Caco-2 (cell line): ENCODE measurements at regions of chr18 and their contacts with region 1.

Region 1: DNA sequence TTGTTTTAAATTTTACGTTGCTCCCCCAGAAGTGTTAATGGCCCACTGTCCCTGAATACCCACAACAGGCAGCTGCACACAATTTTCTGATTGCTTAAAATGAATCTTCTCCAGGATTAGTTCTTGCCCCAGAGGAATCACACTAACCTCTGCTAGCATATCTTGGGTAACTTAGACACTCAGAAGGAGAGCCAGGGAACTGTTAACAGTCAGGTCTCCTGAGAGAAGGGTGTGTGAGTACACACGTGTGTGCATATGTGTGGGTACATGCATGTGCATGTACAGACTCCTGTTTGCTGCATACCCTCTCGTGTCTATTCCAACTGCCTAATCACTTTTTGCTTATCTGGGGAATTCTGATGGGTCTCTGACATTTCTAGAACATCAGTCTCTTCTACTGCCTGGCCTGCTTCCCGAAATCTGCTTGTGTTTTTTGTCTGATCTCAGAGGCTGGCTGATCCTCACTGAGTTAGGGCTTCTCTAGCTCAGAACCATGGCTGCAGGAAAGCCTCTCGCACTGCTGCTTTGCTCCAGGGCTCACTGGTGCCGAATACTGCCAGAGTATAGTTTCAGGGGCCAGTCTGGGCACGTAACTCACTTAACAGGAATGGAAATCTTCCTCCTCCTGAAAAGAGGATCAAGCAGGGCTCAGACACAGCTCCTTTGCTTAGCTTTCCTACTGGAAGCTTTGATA is 62.8 kb downstream of the PRELID3A start:
- DNase-seq: no peak
- H3K4me3 ChIP-seq: no peak overlapping the region
- H3K4me3 Mint-ChIP-seq: no peak overlapping the region
- H3K27ac Mint-ChIP-seq: no peak overlapping the region
- H3K4me1 ChIP-seq: no peaks in the 10 kb centered on the region
- H3K4me1 Mint-ChIP-seq: no peaks in the 10 kb centered on the region
- H3K27me3 ChIP-seq: no peaks in the 10 kb centered on the region
- H3K27me3 Mint-ChIP-seq: no peaks in the 10 kb centered on the region
- CTCF ChIP-seq: no peak

Region 2: GRCh38 chr18:12531749-12532148 is 61.2 kb after region 1 on chr18:
- CTCF ChIA-PET with region 1: no interaction called
- POLR2A ChIA-PET with region 1: no interaction called
- intact Hi-C with region 1: loop called (anchors 10 kb)
- DNase-seq: no peak
- H3K4me3 ChIP-seq: no peak overlapping the region
- H3K4me3 Mint-ChIP-seq: no peak overlapping the region
- H3K27ac Mint-ChIP-seq: no peak overlapping the region
- H3K4me1 ChIP-seq: no peaks in the 10 kb centered on the region
- H3K4me1 Mint-ChIP-seq: no peaks in the 10 kb centered on the region
- H3K27me3 ChIP-seq: no peaks in the 10 kb centered on the region
- H3K27me3 Mint-ChIP-seq: no peaks in the 10 kb centered on the region
- CTCF ChIP-seq: peak in 1 of 2 experiments; percentile 9